Heart right ventricle (tissue), 16 donors: ENCODE measurements at regions of chr1 and their contacts with region 1.

Region 1: GRCh38 chr1:226912587-226913176 is 27.4 kb upstream of the COQ8A start:
- DNase-seq: peak; percentile 60 to 66
- ATAC-seq: peak; percentile 69 to 88 (median 83)
- H3K4me3 ChIP-seq: no peak overlapping the region
- H3K27ac ChIP-seq: peak overlapping the region in 1 of 10 donors; percentile 49
- H3K4me1 ChIP-seq: peaks cover 0 to 15% (median 6%) of the 10 kb centered on the region in 9 donors
- H3K27me3 ChIP-seq: no peaks in the 10 kb centered on the region
- CTCF ChIP-seq: peak; percentile 59 to 82 (median 67)

Region 2: GRCh38 chr1:226772446-226773139 is 140.1 kb before region 1 on chr1:
- intact Hi-C with region 1: no loop called
- DNase-seq: no peak
- ATAC-seq: no peak
- H3K4me3 ChIP-seq: no peak overlapping the region
- H3K27ac ChIP-seq: no peak overlapping the region
- H3K4me1 ChIP-seq: no peaks in the 10 kb centered on the region
- H3K27me3 ChIP-seq: no peaks in the 10 kb centered on the region
- CTCF ChIP-seq: no peak

Region 3: DNA sequence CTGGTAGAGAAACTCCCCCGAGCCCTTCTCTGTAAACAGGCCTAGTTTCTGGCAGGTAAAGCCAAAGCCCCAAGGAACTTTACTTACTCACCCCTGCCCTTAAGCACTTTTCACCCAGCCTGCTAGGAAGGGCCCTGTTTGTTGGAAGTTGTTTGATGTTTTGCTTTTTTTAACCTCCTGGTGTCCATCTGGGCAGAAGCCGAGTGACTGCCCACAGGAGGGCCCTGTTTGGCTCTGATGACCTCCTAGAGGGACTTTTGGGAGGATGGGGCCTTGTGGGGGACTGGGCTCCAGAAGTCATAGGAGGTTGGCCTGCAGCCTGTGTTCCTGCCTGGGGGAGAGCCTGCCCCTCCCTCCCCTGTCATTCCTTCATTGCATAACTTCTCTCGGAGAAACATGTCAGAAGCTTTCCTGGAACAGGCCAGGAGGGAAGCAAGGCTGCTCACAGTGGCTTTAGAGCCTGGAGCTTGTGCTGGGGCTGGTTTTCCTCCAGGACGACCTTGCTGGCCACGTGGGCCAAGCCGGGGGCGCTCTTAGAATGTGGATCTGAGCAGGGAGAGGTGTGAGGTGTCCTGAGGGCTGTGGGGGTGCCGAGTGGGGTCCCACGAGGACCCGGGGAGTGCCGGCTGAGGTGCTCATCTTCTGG is 61.3 kb after region 1 on chr1:
- intact Hi-C with region 1: loop called in 2 of 10 experiments (anchors 10 kb)
- DNase-seq: peak in 1 of 2 donors; percentile 45
- ATAC-seq: peak; percentile 25 to 77 (median 67)
- H3K4me3 ChIP-seq: no peak overlapping the region
- H3K27ac ChIP-seq: peak overlapping the region; percentile 83 to 96 (median 92)
- H3K4me1 ChIP-seq: peaks cover 20 to 57% (median 38%) of the 10 kb centered on the region in 9 donors
- H3K27me3 ChIP-seq: no peaks in the 10 kb centered on the region
- CTCF ChIP-seq: no peak

Region 4: GRCh38 chr1:227102056-227102455 is 189.4 kb after region 1 on chr1:
- intact Hi-C with region 1: loop called in 1 of 10 experiments (anchors 5 kb)
- DNase-seq: no peak
- ATAC-seq: no peak
- H3K4me3 ChIP-seq: no peak overlapping the region
- H3K27ac ChIP-seq: no peak overlapping the region
- H3K4me1 ChIP-seq: no peaks in the 10 kb centered on the region
- H3K27me3 ChIP-seq: no peaks in the 10 kb centered on the region
- CTCF ChIP-seq: no peak

Region 5: GRCh38 chr1:227245613-227246320 is 333.1 kb after region 1 on chr1:
- intact Hi-C with region 1: loop called in 1 of 10 experiments (anchors 10 kb)
- DNase-seq: peak; percentile 31 to 40
- ATAC-seq: peak; percentile 59 to 95 (median 86)
- H3K4me3 ChIP-seq: no peak overlapping the region
- H3K27ac ChIP-seq: peak overlapping the region in 7 of 10 donors; percentile 6 to 54 (median 24)
- H3K4me1 ChIP-seq: peaks cover 0 to 53% (median 14%) of the 10 kb centered on the region in 9 donors
- H3K27me3 ChIP-seq: no peaks in the 10 kb centered on the region
- CTCF ChIP-seq: peak in 3 of 9 donors; percentile 21 to 40 (median 29)